Activated T-helper 2 cell treated with anti-CD3 and anti-CD28 coated beads, Interferon-gamma antibody, Interleukin-2, Interleukin-4, amounts not matched to agents 10 μg/mL and 5 μg/mL and 100 μg/mL, durations not matched to agents 14 hours and 24 hours and 36 hours (primary cell): ENCODE measurements at regions of chr5 and their contacts with region 1.

Region 1: GRCh38 chr5:132639706-132640130 is 18.3 kb upstream of the IL13 start:
- DNase-seq: no peak
- H3K4me3 Mint-ChIP-seq: peak overlapping the region; percentile 39
- H3K27ac Mint-ChIP-seq: peak overlapping the region; percentile 82
- H3K4me1 Mint-ChIP-seq: peaks cover 83% of the 10 kb centered on the region
- H3K27me3 Mint-ChIP-seq: no peaks in the 10 kb centered on the region

Region 2: DNA sequence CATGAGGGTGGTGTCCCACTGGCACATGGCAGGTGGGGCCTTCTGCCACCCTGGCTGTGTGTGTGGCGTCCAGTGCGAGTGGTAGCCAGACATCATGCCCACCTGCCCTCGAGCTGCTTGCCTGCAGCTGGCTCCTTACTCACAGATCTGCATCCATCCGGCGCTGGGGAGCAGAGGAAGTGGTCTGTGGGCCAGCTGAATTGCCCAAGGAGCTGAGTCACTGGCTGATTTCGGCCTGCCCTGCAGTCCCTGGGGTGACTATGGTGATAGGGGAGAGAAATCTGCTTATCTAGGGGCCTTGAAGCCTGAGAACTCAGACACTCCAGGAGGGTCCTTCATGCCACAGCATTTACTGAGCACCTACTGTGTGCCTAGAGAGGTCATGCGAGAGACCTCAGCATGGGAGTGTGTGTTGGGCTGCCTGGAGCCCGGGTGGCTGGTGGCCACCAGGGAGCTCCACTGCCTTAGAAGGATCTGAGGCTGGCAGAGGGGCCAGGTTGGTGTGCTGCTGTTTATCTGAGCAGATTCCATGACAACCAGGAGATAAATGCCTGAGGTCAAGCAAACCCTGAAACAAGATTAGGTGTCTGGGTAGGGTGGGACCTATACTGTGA is 213.1 kb before region 1 on chr5:
- intact Hi-C with region 1: loop called (anchors 2 kb)
- DNase-seq: peak; percentile 62
- H3K4me3 Mint-ChIP-seq: peak overlapping the region; percentile 67
- H3K27ac Mint-ChIP-seq: peak overlapping the region; percentile 96
- H3K4me1 Mint-ChIP-seq: peaks cover 94% of the 10 kb centered on the region
- H3K27me3 Mint-ChIP-seq: no peaks in the 10 kb centered on the region

Region 3: GRCh38 chr5:132566657-132567056 is 73.1 kb before region 1 on chr5:
- intact Hi-C with region 1: loop called (anchors 5 kb)
- DNase-seq: no peak
- H3K4me3 Mint-ChIP-seq: peak overlapping the region; percentile 0
- H3K27ac Mint-ChIP-seq: peak overlapping the region; percentile 44
- H3K4me1 Mint-ChIP-seq: peaks cover 44% of the 10 kb centered on the region
- H3K27me3 Mint-ChIP-seq: no peaks in the 10 kb centered on the region

Region 4: DNA sequence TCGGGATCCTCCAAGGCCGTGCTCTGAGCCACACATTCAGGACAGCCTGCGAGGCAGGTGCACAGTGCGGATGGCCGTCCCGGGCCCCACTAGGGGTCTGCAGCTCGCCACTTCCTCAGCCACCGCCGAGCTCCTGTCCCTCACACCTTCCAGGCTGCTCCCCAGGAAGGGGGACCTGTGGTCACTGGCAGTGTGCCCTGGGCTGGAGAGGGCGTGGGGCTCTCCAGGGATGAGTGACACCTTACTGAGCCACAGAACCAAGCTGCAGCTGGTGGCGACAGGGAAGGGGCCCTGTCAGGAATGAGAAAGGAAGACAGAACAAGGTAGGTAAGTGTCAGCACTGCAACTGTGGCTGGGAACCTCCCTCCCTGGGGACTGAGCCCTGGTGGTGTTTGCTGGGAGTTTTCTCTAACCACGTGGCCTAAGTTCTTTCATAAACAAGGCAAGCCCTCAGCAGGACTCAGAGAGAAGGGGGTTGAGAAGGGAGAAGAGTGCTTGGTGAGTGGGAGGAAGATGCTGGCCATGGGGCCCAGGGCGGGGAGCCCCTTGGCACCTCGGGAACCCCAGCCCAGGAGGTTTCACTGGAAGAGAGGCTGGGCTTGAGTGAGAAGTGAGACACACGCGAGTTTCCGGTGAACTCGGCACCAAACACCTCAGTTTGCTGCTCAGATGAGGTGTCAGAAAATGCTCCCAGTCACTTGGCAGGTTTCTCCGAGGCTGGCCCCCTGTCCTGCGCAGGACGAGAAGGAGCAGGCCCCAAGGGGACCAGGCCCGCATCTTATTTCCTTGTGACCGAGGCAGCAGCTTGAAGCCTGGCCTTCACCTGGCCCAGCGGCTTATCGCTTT is 23.4 kb after region 1 on chr5:
- intact Hi-C with region 1: loop called (anchors 1 kb)
- DNase-seq: no peak
- H3K4me3 Mint-ChIP-seq: no peak overlapping the region
- H3K27ac Mint-ChIP-seq: peak overlapping the region; percentile 92
- H3K4me1 Mint-ChIP-seq: peaks cover 74% of the 10 kb centered on the region
- H3K27me3 Mint-ChIP-seq: no peaks in the 10 kb centered on the region

Region 5: GRCh38 chr5:132736853-132737833 is 97.4 kb after region 1 on chr5 and contains the start of gene KIF3A:
- intact Hi-C with region 1: loop called (anchors 1 kb)
- DNase-seq: peak; percentile 98
- H3K4me3 Mint-ChIP-seq: peak within 1 kb of the TSS; percentile 85
- H3K27ac Mint-ChIP-seq: peak within 1 kb of the TSS; percentile 86
- H3K4me1 Mint-ChIP-seq: peaks cover 36% of the 10 kb centered on the region
- H3K27me3 Mint-ChIP-seq: peaks cover 14% of the 10 kb centered on the region
- total RNA-seq, gene KIF3A: 40.7 and 41.4 TPM in 2 replicates